Endothelial cell of umbilical vein (primary cell): ENCODE measurements at regions of chr7 and their contacts with region 1.

Region 1: GRCh38 chr7:44797329-44798251 is 1.1 kb downstream of the PPIA start:
- DNase-seq: peak; percentile 90
- H3K4me3 ChIP-seq: peak overlapping the region; percentile 91 to 93 (median 93)
- H3K27ac ChIP-seq: peak overlapping the region; percentile 97
- H3K4me1 ChIP-seq: peaks cover 10% of the 10 kb centered on the region
- H3K27me3 ChIP-seq: no peaks in the 10 kb centered on the region
- CTCF ChIP-seq: peak; percentile 20 to 56
- POLR2A ChIP-seq: peak; percentile 43

Region 2: GRCh38 chr7:44581879-44582603 is 215.5 kb before region 1 on chr7 and contains the start of gene TMED4:
- CTCF ChIA-PET with region 1: no interaction called
- POLR2A ChIA-PET with region 1: no interaction called
- dilution Hi-C with region 1: no loop called
- intact Hi-C with region 1: loop called (anchors 1 kb)
- DNase-seq: peak; percentile 99
- H3K4me3 ChIP-seq: peak within 1 kb of the TSS; percentile 34 to 78 (median 67)
- H3K27ac ChIP-seq: peak within 1 kb of the TSS; percentile 73
- H3K4me1 ChIP-seq: peaks cover 8% of the 10 kb centered on the region
- H3K27me3 ChIP-seq: no peaks in the 10 kb centered on the region
- CTCF ChIP-seq: no peak
- POLR2A ChIP-seq: peak; percentile 98
- total RNA-seq, gene TMED4: 63.4 and 65.4 TPM in 2 replicates

Region 3: GRCh38 chr7:44606450-44607254 is 190.9 kb before region 1 on chr7 and contains the start of gene OGDH:
- CTCF ChIA-PET with region 1: interaction called, 3 read pairs
- POLR2A ChIA-PET with region 1: interaction called, 4 read pairs
- dilution Hi-C with region 1: no loop called
- intact Hi-C with region 1: loop called (anchors 1 kb)
- DNase-seq: peak; percentile 99
- H3K4me3 ChIP-seq: peak within 1 kb of the TSS; percentile 57 to 98 (median 81)
- H3K27ac ChIP-seq: peak within 1 kb of the TSS; percentile 80
- H3K4me1 ChIP-seq: peaks cover 11% of the 10 kb centered on the region
- H3K27me3 ChIP-seq: peaks cover 0 to 2% of the 10 kb centered on the region in 2 experiments
- CTCF ChIP-seq: no peak
- POLR2A ChIP-seq: peak; percentile 86
- total RNA-seq, gene OGDH: 81.4 and 88.9 TPM in 2 replicates

Region 4: DNA sequence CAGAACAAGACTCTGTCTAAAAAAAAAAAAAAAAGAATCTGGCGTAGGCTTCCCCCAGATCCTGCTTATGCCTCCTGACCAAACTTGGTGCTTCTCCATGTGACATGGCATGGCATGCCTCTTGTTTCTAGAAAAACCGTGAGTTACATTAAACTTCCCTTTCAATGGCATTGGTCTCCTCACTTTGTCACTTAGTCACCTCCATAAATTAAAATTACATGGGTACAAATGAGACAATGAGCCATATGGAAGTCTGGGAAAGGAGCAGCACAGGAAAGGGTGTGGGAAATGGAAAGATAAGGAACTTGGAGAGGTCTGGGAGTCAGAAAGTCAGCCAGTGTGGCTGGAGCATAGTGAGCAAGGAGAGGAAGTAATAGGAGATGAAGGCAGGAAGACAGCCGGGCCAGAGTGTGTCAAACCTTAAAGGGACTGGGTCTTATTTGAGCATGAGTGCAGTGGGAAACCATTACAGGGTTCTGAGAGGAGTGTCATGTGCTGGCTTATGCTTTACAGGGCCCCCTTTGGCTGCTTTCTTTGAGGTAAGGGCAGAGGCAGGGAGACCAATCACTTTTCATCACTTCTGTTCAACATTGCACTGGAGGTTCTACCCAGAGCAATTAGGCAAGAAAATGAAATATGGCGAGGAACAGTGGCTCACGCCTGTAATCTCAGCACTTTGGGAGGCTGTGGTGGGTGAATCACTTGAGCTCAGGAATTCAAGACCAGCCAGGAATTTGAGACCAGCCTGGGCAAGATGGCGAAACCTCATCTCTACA is 70.2 kb before region 1 on chr7:
- CTCF ChIA-PET with region 1: no interaction called
- POLR2A ChIA-PET with region 1: no interaction called
- dilution Hi-C with region 1: no loop called
- intact Hi-C with region 1: loop called (anchors 2 kb)
- DNase-seq: peak; percentile 80
- H3K4me3 ChIP-seq: no peak overlapping the region
- H3K27ac ChIP-seq: peak overlapping the region; percentile 67
- H3K4me1 ChIP-seq: peaks cover 16% of the 10 kb centered on the region
- H3K27me3 ChIP-seq: no peaks in the 10 kb centered on the region
- CTCF ChIP-seq: no peak
- POLR2A ChIP-seq: peak; percentile 48

Region 5: GRCh38 chr7:44769776-44770662 is 27.6 kb before region 1 on chr7:
- CTCF ChIA-PET with region 1: no interaction called
- POLR2A ChIA-PET with region 1: no interaction called
- dilution Hi-C with region 1: no loop called
- intact Hi-C with region 1: no loop called
- DNase-seq: no peak
- H3K4me3 ChIP-seq: no peak overlapping the region
- H3K27ac ChIP-seq: no peak overlapping the region
- H3K4me1 ChIP-seq: no peaks in the 10 kb centered on the region
- H3K27me3 ChIP-seq: no peaks in the 10 kb centered on the region
- CTCF ChIP-seq: no peak
- POLR2A ChIP-seq: no peak

Region 6: DNA sequence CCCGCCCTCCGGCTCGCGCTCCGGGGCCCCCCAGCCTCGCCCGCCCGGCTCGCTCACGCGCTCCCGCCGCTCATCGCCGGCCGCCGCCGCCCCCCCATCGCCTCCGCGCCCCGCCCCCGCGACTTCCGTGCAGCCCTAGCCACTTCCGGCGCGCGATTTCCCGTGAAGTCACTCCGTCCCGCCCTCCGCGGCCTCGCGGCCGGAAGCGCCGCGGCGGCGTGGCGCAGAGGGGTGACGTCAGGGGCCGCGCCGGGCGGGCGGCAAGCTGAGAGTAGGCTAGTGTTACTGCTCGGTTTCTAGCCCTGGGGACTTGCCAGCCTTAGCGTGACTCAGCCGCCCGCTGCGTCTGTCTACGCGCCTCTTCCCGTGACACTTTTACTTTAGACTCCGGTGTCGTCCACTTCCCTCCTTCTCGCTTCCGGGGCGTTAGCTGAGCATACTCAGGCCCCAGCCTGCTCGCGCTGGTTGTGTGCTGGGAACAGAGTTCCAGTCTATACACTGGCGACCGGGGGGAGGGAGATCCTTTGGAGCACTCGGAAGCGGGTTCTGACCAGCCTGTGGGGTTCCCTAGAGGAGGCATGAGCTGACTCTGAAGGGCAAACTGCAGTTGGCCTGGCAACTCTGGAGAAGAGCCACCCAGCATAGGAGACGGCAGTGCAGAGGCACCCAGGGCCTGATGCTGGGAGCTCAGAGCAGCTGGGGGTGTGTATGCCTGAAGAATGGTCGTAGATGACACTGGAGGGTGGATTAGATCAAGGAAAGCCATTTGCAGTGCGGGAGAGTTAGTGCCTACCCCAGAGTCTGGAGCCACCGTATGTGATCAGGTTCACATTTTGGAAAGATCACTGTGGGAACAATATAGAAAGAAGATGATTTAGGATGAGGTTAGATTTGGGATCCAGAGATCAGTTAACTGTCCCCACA is 88.1 kb after region 1 on chr7 and contains the start of gene PURB:
- CTCF ChIA-PET with region 1: no interaction called
- POLR2A ChIA-PET with region 1: no interaction called
- dilution Hi-C with region 1: no loop called
- intact Hi-C with region 1: loop called (anchors 1 kb)
- DNase-seq: peak; percentile 97
- H3K4me3 ChIP-seq: peak within 1 kb of the TSS; percentile 30 to 85 (median 78)
- H3K27ac ChIP-seq: peak within 1 kb of the TSS; percentile 91
- H3K4me1 ChIP-seq: peaks cover 42% of the 10 kb centered on the region
- H3K27me3 ChIP-seq: no peaks in the 10 kb centered on the region
- CTCF ChIP-seq: no peak
- POLR2A ChIP-seq: no peak
- total RNA-seq, gene PURB: 25.0 and 25.5 TPM in 2 replicates